Dorsolateral prefrontal cortex (tissue), 120 donors: ENCODE measurements at regions of chr19 and their contacts with region 1.

Region 1: GRCh38 chr19:32971715-32972540 is at the starts of genes CEP89 and FAAP24:
- DNase-seq: peak; percentile 95 to 99 (median 98)
- H3K4me3 ChIP-seq: peak within 1 kb of the TSS; percentile 60 to 91 (median 80)
- H3K27ac ChIP-seq: peak within 1 kb of the TSS in 22 of 59 donors; percentile 19 to 75 (median 52)
- H3K27me3 ChIP-seq: no peaks in the 10 kb centered on the region
- CTCF ChIP-seq: peak in 34 of 56 donors; percentile 9 to 58 (median 34)
- total RNA-seq, gene CEP89: 12.5 to 32.5 (median 20.0) TPM
- total RNA-seq, gene FAAP24: 0.20 to 3.6 (median 1.1) TPM in 109 of 120 experiments, not detected in the others

Region 2: GRCh38 chr19:32580901-32581703 is 390.8 kb before region 1 on chr19 and contains the start of gene PDCD5:
- intact Hi-C with region 1: loop called in 1 of 2 experiments (anchors 5 kb)
- DNase-seq: peak; percentile 91 to 98 (median 96)
- H3K4me3 ChIP-seq: peak within 1 kb of the TSS; percentile 63 to 100 (median 91)
- H3K27ac ChIP-seq: peak within 1 kb of the TSS in 54 of 59 donors; percentile 9 to 89 (median 79)
- H3K27me3 ChIP-seq: no peaks in the 10 kb centered on the region
- CTCF ChIP-seq: peak in 30 of 56 donors; percentile 5 to 61 (median 28)
- total RNA-seq, gene PDCD5: 34.0 to 109 (median 63.1) TPM

Region 3: DNA sequence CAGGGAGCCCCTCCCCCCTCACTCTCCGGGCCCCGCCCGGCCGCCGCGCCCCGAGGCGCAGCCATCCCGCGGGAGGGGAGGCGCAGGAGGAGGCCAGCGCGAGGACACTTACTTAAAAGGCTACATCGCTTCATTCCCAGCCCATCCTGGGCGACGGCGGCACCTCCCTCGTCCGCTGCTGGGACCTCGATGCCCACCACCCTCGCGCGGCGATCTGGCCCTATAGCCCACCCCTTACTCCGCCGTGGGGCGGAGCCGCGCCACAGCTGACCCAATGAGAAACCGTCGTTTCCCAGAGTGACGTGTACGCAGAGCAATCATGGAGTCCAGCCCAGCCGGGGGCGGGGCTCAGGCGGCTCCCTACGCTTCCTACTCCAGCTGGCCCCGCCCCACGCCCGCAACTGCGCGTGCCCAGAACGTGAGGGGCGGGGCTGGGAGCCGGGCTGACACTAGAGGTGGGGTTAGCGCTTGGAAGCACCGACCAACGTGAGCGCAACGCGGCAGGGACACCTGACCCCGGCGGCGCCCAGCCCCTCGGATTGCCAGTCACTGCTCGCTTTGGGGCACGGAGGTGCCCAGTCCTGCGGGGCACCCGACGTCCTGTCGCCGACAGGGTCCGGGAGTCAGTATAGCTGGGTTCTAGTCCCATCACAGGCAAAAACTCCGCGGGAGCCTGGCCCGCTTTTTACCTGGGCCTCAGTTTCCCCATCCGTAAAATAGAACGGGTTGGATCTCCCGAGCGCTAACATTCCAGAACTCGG is 296.8 kb before region 1 on chr19 and contains the start of gene ANKRD27:
- intact Hi-C with region 1: loop called in 1 of 2 experiments (anchors 10 kb)
- DNase-seq: peak; percentile 94 to 99 (median 98)
- H3K4me3 ChIP-seq: peak within 1 kb of the TSS; percentile 73 to 99 (median 92)
- H3K27ac ChIP-seq: peak within 1 kb of the TSS in 49 of 59 donors; percentile 7 to 90 (median 77)
- H3K27me3 ChIP-seq: peaks cover 0 to 15% (median 4%) of the 10 kb centered on the region in 45 donors
- CTCF ChIP-seq: peak in 6 of 56 donors; percentile 12 to 33 (median 14)
- total RNA-seq, gene ANKRD27: 27.8 to 59.7 (median 42.6) TPM

Region 4: DNA sequence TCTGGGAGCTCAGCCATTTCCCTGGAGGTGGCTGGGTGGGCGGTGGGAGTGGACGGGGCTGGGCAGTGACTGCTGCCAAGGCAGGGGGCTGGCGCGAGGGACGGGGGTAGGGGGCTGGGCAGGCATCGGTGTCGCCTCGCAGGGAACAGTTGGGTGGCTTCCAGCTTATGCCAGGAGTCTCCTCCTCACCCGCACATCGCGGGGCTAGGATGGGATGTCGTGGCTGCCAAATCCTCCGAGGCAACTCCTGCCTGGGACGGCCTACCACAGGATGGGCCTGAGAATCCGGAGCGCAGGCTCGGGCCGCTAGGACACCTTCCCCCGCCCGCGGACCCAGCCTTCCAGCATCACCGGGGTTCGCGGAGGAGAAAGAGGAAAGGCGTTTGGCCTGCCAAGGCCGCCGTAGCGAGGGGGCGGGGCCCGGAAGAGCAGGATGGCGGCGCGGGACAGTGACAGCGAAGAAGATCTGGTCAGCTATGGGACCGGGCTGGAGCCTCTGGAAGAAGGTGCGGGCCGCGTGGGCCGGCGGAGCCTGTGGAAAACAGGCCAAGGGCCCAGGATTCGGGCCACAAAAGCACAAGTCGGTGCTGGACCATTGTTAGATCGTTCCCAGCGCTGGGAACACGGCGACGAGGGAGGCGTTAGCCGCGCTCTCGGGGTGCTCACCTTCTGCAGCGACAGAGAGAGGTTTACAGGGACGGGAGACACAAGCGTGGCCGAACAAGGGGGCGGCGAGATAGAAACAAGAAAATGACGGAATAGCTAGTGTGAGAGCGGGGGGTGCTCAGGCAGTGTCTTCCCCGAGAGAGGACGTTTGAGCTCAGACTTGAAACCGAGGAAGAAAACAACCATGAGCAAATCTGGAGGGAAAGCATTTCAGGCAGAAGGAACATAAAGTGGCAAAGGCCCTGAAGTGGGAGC is 109.1 kb after region 1 on chr19 and contains the start of gene GPATCH1:
- intact Hi-C with region 1: loop called (anchors 2 to 5 kb)
- DNase-seq: peak; percentile 87 to 95 (median 92)
- H3K4me3 ChIP-seq: peak within 1 kb of the TSS; percentile 62 to 99 (median 94)
- H3K27ac ChIP-seq: peak within 1 kb of the TSS; percentile 6 to 96 (median 87)
- H3K27me3 ChIP-seq: no peaks in the 10 kb centered on the region
- CTCF ChIP-seq: peak in 40 of 56 donors; percentile 11 to 57 (median 34)
- total RNA-seq, gene GPATCH1: 9.0 to 18.2 (median 13.1) TPM

Region 5: GRCh38 chr19:33125929-33126388 is 154.0 kb after region 1 on chr19:
- intact Hi-C with region 1: loop called in 1 of 2 experiments (anchors 5 kb)
- DNase-seq: peak in 6 of 10 donors; percentile 42 to 59 (median 45)
- H3K4me3 ChIP-seq: peak overlapping the region in 4 of 59 donors; percentile 6 to 13 (median 12)
- H3K27ac ChIP-seq: no peak overlapping the region
- H3K27me3 ChIP-seq: no peaks in the 10 kb centered on the region
- CTCF ChIP-seq: peak; percentile 51 to 92 (median 79)

Region 6: GRCh38 chr19:33358408-33358807 is 386.5 kb after region 1 on chr19:
- intact Hi-C with region 1: no loop called
- DNase-seq: no peak
- H3K4me3 ChIP-seq: no peak overlapping the region
- H3K27ac ChIP-seq: no peak overlapping the region
- H3K27me3 ChIP-seq: no peaks in the 10 kb centered on the region
- CTCF ChIP-seq: no peak

Region 7: GRCh38 chr19:33373701-33374421 is 401.9 kb after region 1 on chr19 and contains the start of gene CEBPG:
- intact Hi-C with region 1: loop called in 1 of 2 experiments (anchors 10 kb)
- DNase-seq: peak in 1 of 10 donors; percentile 52
- H3K4me3 ChIP-seq: peak within 1 kb of the TSS; percentile 55 to 94 (median 80)
- H3K27ac ChIP-seq: peak within 1 kb of the TSS in 57 of 59 donors; percentile 7 to 97 (median 87)
- H3K27me3 ChIP-seq: no peaks in the 10 kb centered on the region
- CTCF ChIP-seq: peak in 7 of 56 donors; percentile 1 to 25 (median 7)
- total RNA-seq, gene CEBPG: 15.1 to 42.7 (median 26.1) TPM